Mucosa of descending colon (tissue), 3 donors: ENCODE measurements at regions of chr12 and their contacts with region 1.

Region 1: GRCh38 chr12:58919231-58920101 is 838 bp downstream of the LRIG3 start:
- DNase-seq: peak; percentile 60 to 67 (median 65)
- ATAC-seq: peak; percentile 41
- H3K4me3 ChIP-seq: peak overlapping the region; percentile 79
- H3K4me1 ChIP-seq: peaks cover 17% of the 10 kb centered on the region
- CTCF ChIP-seq: no peak

Region 2: DNA sequence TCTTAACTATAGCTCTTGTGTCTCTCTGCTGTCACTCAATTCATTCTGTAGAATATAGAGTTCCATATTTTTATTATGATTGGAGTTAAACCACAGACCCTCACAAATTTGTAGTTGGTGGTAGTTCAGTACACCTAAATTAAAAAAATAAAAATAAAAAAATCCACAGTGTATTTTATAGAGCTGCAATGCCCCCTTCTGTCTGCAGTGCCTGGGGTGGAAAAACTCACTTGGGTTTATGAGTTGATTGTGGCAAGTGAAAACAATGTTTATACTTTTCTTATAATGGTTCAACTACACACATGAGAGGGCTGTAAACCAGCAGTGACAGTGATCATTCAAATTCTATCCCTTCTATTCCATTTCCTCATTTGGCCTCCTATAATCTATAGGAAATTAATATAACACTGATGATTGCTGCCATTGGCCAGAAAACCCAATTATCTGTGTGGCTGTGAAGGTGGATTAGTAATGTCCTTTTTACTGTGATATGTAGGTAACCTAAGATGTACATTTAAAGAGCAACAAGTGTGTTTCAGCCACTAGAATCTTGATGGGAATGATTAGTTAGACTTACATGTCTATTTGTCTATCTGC is 167.7 kb after region 1 on chr12:
- intact Hi-C with region 1: loop called in 1 of 2 experiments (anchors 10 kb)
- DNase-seq: peak in 1 of 3 donors; percentile 49
- ATAC-seq: peak; percentile 67
- H3K4me3 ChIP-seq: no peak overlapping the region
- H3K4me1 ChIP-seq: peaks cover 2% of the 10 kb centered on the region
- CTCF ChIP-seq: peak; percentile 19